ENCODE measurements at regions of chr11 and their contacts with region 1.

Region 1: GRCh38 chr11:86218125-86219084 is 26.1 kb upstream of the EED start:
- DNase-seq: peak; percentile 50 to 75
- ATAC-seq: peak; percentile 92

Region 2: DNA sequence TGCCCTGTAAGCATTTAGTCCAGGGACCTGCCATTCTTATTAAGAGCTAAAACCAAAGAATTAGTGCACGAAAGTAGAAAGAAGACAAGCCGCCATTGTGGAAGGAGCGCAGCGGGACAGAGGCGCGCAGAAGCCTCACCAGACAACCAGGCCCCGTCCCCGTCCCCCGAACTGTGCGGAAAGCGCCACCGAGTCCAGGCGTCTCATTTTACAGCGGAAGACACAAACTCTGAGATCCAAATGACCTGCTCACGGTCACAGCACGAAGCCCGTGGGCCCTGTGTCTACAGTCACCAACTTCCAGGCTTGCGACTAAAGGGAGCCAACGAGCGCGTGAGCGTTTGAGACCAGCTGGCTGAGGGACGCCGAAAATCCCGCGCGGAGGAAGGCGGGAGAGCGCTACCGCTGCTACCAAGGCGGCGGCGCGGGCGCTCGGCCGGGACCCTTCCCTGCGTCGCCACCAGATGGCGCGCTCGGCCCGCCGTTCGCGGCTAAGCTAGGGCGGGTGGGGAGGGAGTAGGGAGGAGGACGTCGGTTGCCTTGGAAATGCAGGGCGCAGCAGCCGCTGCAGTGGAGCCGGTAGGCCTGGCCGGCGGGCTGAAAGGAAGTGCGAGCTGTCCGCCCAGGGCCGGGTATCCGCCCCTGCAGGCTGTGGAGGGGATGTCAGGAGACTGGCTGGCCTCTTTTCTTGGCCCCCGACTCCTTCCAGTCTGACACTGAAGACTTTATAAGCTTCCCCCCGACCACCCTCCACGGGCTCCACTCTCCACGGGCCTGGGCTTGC is 363.7 kb before region 1 on chr11:
- intact Hi-C with region 1: loop called in 1 of 2 experiments (anchors 10 kb)
- DNase-seq: peak; percentile 93 to 95
- ATAC-seq: peak; percentile 97

Region 3: GRCh38 chr11:85941380-85941973 is 276.9 kb before region 1 on chr11:
- intact Hi-C with region 1: loop called in 1 of 2 experiments (anchors 5 kb)
- DNase-seq: peak in 1 of 2 donors; percentile 30
- ATAC-seq: peak; percentile 75